Stomach (tissue), 19 donors: ENCODE measurements at regions of chr20 and their contacts with region 1.

Region 1: DNA sequence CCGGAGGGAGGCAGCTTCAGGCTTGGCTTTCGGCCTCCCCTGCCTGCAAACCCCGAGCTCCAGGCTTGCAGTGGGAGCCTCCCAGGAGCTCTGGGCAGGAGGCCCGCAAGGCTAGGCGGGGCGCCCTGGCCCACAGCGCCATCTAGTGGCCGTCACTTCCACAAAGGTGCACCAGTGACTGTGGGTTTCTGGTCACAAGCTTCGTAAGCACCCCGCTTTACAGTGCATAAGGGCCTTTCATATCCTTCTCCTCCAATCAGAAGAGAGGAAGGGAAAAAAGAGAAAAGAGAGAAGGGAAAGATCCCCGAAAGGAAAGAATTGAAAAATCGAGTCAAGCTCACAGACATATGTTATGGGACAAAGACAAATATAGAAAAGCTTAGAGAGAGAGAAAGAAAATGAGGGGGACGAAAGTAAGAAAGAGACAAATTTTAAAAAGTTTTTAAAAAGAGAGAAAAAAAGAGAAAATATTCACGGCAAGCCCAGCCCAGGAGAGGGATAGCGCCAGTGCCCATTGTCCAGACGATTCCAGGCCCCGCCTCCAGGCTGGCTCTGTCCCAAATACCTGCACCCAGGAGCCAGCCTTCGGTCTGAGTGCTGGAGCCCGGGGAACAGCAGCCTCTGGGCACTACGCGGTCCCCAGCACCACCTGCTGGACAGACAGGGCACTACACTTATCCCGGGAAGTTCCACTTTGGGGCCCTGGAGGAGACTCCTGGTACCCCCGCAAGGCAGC is 207.1 kb downstream of the PREX1 start:
- DNase-seq: peak; percentile 92 to 96
- H3K4me3 ChIP-seq: peak overlapping the region; percentile 14 to 36 (median 29)
- H3K27ac ChIP-seq: peak overlapping the region in 1 of 5 donors; percentile 53
- H3K4me1 ChIP-seq: peaks cover 19 to 24% (median 21%) of the 10 kb centered on the region in 4 donors
- H3K27me3 ChIP-seq: no peaks in the 10 kb centered on the region
- CTCF ChIP-seq: peak in 6 of 7 experiments; percentile 40 to 91 (median 84)
- EP300 ChIP-seq: no peak
- POLR2A ChIP-seq: no peak

Region 2: GRCh38 chr20:47677635-47678453 is 942.8 kb before region 1 on chr20:
- intact Hi-C with region 1: loop called (anchors 5 kb)
- DNase-seq: peak; percentile 64 to 87
- H3K4me3 ChIP-seq: no peak overlapping the region
- H3K27ac ChIP-seq: no peak overlapping the region
- H3K4me1 ChIP-seq: peaks cover 0 to 6% (median 2%) of the 10 kb centered on the region in 4 donors
- H3K27me3 ChIP-seq: no peaks in the 10 kb centered on the region
- CTCF ChIP-seq: peak in 5 of 7 experiments; percentile 43 to 73 (median 68)
- EP300 ChIP-seq: no peak
- POLR2A ChIP-seq: no peak

Region 3: GRCh38 chr20:47725248-47725973 is 895.3 kb before region 1 on chr20:
- intact Hi-C with region 1: loop called (anchors 10 kb)
- DNase-seq: peak; percentile 76 to 95
- H3K4me3 ChIP-seq: no peak overlapping the region
- H3K27ac ChIP-seq: no peak overlapping the region
- H3K4me1 ChIP-seq: peaks cover 0 to 29% (median 7%) of the 10 kb centered on the region in 4 donors
- H3K27me3 ChIP-seq: no peaks in the 10 kb centered on the region
- CTCF ChIP-seq: peak in 5 of 7 experiments; percentile 55 to 88 (median 82)
- EP300 ChIP-seq: no peak
- POLR2A ChIP-seq: no peak